Activated CD4-positive, alpha-beta T cell treated with anti-CD3 and anti-CD28 coated beads, Interleukin-2, amount 10 ng/mL, durations not matched to agents 24 days and 14 days (primary cell): ENCODE measurements at regions of chr1 and their contacts with region 1.

Region 1: DNA sequence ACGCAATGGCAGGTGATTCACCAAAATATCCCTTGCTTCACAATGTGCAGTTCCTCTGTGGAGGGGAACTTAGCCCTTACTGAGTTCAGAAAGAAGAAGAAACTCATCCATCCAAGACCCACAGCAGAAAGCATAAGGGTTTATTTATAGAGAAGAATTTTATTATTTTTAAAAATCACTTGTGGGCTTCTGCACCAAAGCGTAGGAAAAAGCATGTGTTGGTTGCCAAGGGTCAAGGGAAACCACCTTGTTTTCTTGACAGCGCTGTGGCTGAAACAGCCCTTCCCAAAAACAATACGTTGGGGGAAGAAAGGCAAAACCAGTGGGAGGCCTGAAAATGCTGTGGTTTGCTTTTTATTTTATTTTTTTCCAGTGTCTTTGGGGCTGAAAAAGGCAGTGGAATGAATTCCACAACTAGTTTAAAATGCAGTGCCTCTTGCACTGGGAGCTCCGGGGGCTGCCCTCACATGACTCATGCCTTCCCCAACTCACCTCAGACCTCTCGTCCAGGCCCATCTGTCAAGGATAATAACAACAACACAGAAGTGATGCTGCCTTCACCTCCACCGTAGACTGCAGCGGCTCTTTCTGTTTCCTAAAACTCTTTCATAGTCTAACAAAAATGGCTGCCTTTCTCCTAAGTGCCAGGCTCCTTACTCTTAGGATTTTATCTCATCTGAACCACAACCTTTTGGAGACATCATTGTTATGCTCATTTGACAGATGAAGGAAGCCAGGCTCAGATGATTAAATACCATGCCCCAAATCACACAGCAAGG is 224.2 kb upstream of the JUN start:
- DNase-seq: peak; percentile 66
- H3K4me3 Mint-ChIP-seq: peak overlapping the region; percentile 64
- H3K27ac Mint-ChIP-seq: peak overlapping the region; percentile 90
- H3K4me1 Mint-ChIP-seq: peaks cover 50% of the 10 kb centered on the region
- H3K27me3 Mint-ChIP-seq: no peaks in the 10 kb centered on the region

Region 2: GRCh38 chr1:58816072-58816746 is 191.8 kb before region 1 on chr1:
- intact Hi-C with region 1: loop called (anchors 5 kb)
- DNase-seq: peak; percentile 96
- H3K4me3 Mint-ChIP-seq: peak overlapping the region; percentile 87
- H3K27ac Mint-ChIP-seq: peak overlapping the region; percentile 87
- H3K4me1 Mint-ChIP-seq: peaks cover 47% of the 10 kb centered on the region
- H3K27me3 Mint-ChIP-seq: no peaks in the 10 kb centered on the region

Region 3: GRCh38 chr1:58941471-58942289 is 66.3 kb before region 1 on chr1:
- intact Hi-C with region 1: loop called (anchors 5 kb)
- DNase-seq: peak; percentile 86
- H3K4me3 Mint-ChIP-seq: peak overlapping the region; percentile 57
- H3K27ac Mint-ChIP-seq: peak overlapping the region; percentile 81
- H3K4me1 Mint-ChIP-seq: peaks cover 59% of the 10 kb centered on the region
- H3K27me3 Mint-ChIP-seq: no peaks in the 10 kb centered on the region

Region 4: DNA sequence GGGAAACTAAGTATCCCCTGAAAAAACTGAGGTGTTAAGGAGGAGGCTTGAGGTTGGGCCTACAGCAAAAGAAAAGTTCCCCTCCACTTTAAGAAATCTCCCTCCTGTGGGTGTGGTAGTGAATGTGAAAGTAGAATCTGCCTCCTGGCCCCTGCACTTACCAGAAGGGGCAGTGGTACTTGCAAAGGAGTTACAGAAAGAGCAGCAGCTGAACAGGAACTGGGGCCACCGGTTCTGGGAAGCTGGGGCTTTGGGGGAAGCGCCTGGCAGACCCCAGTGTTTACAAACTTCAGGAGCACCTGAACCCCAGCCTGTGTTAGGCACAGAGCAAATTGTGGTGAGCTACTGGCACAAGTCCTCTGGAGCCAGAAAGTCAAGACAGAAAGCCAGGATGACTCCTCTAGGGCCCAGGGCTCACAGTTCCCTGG is 38.7 kb after region 1 on chr1:
- intact Hi-C with region 1: loop called (anchors 1 kb)
- DNase-seq: peak; percentile 89
- H3K4me3 Mint-ChIP-seq: peak overlapping the region; percentile 76
- H3K27ac Mint-ChIP-seq: peak overlapping the region; percentile 96
- H3K4me1 Mint-ChIP-seq: peaks cover 60% of the 10 kb centered on the region
- H3K27me3 Mint-ChIP-seq: no peaks in the 10 kb centered on the region

Region 5: DNA sequence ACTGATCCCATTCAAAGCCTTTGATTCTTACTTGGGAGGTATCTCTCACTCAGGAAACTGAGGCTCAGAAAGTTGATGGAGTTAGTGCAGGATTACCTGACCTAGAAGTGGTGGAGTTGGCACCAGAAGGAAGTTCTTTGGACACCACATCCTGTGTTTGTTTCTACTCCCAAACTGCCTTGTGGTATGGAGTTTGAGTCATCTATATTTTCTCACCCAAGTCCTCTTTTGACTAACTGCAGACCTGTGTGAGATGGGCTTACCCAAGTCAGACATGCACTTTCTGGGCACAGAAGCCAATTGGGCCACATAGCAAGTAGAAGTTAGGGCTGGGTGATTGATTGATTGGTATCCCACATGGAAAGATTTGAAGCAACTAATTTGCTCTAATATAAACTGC is 325.0 kb after region 1 on chr1:
- intact Hi-C with region 1: loop called (anchors 2 kb)
- DNase-seq: peak; percentile 76
- H3K4me3 Mint-ChIP-seq: peak overlapping the region; percentile 35
- H3K27ac Mint-ChIP-seq: peak overlapping the region; percentile 80
- H3K4me1 Mint-ChIP-seq: peaks cover 30% of the 10 kb centered on the region
- H3K27me3 Mint-ChIP-seq: no peaks in the 10 kb centered on the region